Posterior vena cava (tissue), 2 donors: ENCODE measurements at regions of chr2 and their contacts with region 1.

Region 1: DNA sequence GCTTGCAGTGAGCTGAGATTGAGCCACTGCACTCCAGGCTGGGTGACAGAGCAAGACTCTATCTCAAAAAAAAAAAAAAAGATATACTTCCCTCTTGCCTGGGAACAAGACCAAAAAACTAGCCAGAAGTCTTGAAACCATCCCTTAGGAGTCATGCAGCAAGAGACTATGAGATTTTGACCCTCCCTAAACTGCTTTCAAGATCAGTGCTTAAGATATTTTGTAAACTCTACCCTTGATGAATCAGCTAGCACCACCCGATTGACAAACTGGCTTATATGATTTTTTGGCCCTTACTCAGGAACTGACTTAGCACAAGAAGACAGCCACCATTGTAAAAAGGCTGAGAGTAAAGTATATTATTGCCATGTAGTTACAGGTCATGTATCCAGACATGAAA is 3.8 kb downstream of the SULT1C3 start:
- DNase-seq: no peak

Region 2: GRCh38 chr2:108139521-108139920 is 104.0 kb before region 1 on chr2:
- intact Hi-C with region 1: no loop called
- DNase-seq: no peak

Region 3: DNA sequence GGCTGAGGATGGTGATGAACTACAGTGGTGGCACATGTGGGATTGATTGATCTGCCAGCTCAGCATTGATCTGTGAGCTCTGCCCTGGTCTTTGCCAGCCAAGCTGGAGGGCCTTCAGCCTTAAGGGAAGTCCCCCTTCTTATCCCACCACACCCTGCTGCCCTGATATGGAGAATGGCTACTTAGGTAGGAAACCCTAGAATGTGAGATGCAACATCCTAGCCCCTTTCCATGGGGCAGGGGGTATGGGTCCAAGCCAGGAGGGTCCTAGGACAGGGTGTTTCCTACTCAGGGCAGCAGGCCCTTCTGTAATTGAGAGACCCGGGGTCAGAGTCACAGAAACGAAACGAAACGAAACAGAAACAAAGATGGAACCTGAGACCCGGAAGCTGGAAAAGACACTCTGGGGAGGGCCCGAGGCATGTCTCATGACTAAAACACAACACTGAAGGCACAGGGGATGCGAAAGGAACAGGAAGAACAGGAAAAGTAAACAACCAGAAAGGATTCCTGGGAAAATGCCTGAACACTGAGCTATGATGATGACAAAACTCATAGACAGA is 28.2 kb after region 1 on chr2:
- intact Hi-C with region 1: loop called in 1 of 2 experiments (anchors 1 kb)
- DNase-seq: no peak